Activated CD4-positive, alpha-beta memory T cell treated with anti-CD3 and anti-CD28 coated beads, Interleukin-2, amount 10 ng/mL, durations not matched to agents 7 days and 5 days (primary cell): ENCODE measurements at regions of chr2 and their contacts with region 1.

Region 1: DNA sequence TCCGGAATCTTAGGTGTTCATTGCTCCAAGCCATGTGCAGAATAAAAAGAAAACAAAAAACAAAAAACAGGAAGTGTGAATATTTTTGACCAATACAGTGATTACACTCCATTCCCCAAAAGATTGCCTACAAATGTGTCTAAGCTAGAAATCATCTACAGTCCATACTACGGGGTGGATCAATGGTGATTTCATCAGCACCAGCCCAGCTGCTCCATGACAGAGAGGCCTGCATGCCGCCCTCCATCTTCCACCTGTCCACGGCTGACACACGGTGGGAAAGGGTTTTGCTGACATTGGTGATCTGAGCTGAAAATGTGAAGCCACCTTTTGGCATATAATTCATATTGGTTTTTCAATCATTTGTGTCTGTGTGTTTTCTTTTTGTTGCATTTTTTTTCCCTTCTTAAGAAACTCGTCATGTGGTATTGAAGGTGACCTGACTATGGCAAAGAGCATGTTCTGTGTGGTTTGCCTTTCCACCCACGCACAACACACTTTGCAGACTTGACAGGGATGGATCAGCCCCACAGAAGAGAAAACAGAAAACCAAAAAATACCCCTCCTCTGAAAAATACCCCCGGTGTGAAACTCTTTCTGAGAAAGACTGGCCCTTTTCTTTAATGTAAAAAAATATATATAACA is 533.1 kb downstream of the RNF144A start:
- DNase-seq: peak; percentile 56
- H3K4me3 Mint-ChIP-seq: no peak overlapping the region
- H3K27ac Mint-ChIP-seq: peak overlapping the region; percentile 97
- H3K4me1 Mint-ChIP-seq: peaks cover 68% of the 10 kb centered on the region
- H3K27me3 Mint-ChIP-seq: no peaks in the 10 kb centered on the region

Region 2: DNA sequence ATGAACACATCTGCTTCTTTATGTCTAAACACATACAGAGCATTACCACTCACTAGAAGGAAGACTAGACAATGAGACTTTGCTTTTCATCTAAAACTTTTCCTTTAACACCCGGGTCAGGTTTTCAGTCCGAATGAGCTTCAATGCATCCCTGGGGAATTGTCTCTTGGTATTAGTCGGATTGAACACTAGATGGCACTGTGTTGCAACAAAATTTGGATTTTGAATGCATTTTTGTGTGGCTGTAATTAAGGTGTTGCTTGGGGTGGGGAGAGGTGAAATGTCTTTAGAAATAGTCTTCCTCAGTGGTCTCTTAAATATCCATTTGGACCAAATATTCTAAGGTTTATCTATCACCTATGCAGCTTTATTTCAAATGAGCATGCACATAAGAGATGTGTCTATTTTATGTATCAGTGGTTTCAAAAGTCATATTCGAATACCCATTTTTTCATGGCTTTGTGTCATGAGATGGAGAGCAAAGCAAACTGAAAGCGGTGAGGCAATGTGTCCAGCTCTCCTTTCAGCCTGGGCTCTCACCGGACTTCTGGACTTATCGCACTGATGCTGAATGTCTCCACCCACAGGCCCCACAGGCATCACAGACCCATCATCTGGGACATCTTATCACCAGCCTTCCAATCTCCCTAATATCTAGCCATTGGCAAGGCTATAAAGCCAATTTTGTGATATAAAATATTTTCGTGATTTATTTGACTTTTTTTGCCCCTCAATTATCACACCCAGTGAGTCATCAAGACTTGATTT is 22.8 kb before region 1 on chr2:
- CTCF ChIA-PET with region 1: interaction called, 7 read pairs
- POLR2A ChIA-PET with region 1: interaction called, 16 read pairs
- DNase-seq: no peak
- H3K4me3 Mint-ChIP-seq: peak overlapping the region; percentile 35
- H3K27ac Mint-ChIP-seq: peak overlapping the region; percentile 59
- H3K4me1 Mint-ChIP-seq: peaks cover 43% of the 10 kb centered on the region
- H3K27me3 Mint-ChIP-seq: peaks cover 5% of the 10 kb centered on the region

Region 3: GRCh38 chr2:7437716-7438632 is 12.3 kb before region 1 on chr2:
- CTCF ChIA-PET with region 1: interaction called, 3 read pairs
- POLR2A ChIA-PET with region 1: interaction called, 78 read pairs
- DNase-seq: no peak
- H3K4me3 Mint-ChIP-seq: peak overlapping the region; percentile 38
- H3K27ac Mint-ChIP-seq: peak overlapping the region; percentile 92
- H3K4me1 Mint-ChIP-seq: peaks cover 69% of the 10 kb centered on the region
- H3K27me3 Mint-ChIP-seq: peaks cover 6% of the 10 kb centered on the region

Region 4: GRCh38 chr2:7523481-7524120 is 73.3 kb after region 1 on chr2:
- CTCF ChIA-PET with region 1: no interaction called
- POLR2A ChIA-PET with region 1: interaction called, 12 read pairs
- DNase-seq: no peak
- H3K4me3 Mint-ChIP-seq: peak overlapping the region; percentile 34
- H3K27ac Mint-ChIP-seq: peak overlapping the region; percentile 77
- H3K4me1 Mint-ChIP-seq: peaks cover 43% of the 10 kb centered on the region
- H3K27me3 Mint-ChIP-seq: no peaks in the 10 kb centered on the region